ENCODE measurements at regions of chr1 and their contacts with region 1.

Region 1: GRCh38 chr1:14733048-14733778 is 134.7 kb downstream of the KAZN start:
- DNase-seq: no peak

Region 2: DNA sequence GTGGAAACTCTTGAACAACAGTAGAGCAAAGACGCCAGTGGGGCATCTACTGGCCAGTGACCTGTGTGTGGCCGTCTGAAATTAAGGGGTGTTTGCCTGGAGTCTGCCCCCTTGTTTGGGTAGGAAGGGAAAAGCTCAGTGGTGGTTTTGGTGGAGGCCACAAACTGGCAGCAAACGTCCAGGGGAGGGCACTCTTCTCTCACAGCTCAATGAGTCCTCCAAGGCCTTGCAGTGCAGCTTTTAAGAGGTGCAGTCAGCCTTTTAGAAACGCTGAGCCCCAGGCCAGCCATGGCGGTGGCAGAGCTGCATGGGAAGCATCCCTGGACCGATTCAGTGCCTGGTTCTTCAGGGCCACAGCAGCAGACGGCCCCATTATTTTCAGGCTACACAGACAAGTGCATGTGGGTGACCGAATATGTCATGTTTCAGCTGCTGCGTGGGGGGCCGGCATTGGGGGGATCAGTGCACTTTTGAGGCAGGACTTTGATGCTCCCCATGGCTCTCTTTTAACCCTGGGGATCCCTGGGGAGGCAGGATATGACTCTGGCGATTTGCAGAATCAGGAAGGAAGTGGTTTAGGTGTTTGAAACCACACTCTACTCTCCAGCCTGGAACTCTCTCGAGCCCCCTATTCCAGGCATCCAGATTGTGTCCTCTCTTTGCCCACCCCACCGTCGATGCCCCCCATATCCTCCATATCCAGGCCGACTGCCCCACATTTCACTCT is 619.2 kb before region 1 on chr1:
- intact Hi-C with region 1: loop called (anchors 5 kb)
- DNase-seq: no peak

Region 3: GRCh38 chr1:14661222-14661621 is 72.0 kb before region 1 on chr1:
- intact Hi-C with region 1: no loop called
- DNase-seq: no peak